ENCODE measurements at regions of chr1 and their contacts with region 1.

Region 1: GRCh38 chr1:15345711-15346355 is 63.9 kb upstream of the EFHD2 start:
- DNase-seq: peak; percentile 78 to 82
- ATAC-seq: peak; percentile 85 to 94 (median 91)
- H3K4me3 ChIP-seq: no peak overlapping the region
- H3K4me3 Mint-ChIP-seq: peak overlapping the region; percentile 79
- H3K27ac ChIP-seq: peak overlapping the region; percentile 94
- H3K27ac Mint-ChIP-seq: peak overlapping the region; percentile 88
- H3K4me1 ChIP-seq: peaks cover 86% of the 10 kb centered on the region
- H3K4me1 Mint-ChIP-seq: peaks cover 72 to 87% of the 10 kb centered on the region in 2 donors
- H3K27me3 ChIP-seq: no peaks in the 10 kb centered on the region
- H3K27me3 Mint-ChIP-seq: no peaks in the 10 kb centered on the region
- CTCF ChIP-seq: no peak

Region 2: DNA sequence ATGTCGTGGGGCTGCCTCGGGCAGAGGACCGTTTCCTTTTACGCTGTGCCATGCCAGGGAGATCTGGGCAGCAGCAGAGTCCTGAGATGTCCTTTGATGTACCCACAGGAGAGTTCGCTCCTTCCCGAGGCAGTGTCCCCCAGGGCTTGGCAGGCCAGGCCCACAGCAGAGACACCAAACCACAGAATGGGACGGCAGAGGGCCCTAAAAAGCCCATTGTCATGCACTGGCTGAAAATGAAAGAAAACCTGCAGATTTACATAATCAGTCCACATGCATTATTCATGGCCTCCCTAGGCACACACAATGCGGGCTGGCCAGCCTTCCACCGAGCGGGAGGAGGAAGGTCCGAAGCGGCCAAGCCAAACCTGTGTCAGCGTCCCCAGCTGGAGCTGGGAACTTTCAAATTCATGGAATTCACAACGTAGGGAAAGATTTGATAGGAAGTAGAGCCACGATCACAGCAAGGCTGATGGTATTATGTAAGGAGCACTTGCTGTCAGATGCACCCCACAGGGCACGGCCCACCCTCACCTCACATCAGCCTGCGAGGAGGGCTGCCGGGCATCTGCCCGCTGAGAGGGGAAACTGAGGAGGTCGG is 38.6 kb after region 1 on chr1:
- intact Hi-C with region 1: loop called (anchors 5 kb)
- DNase-seq: peak; percentile 20 to 29
- ATAC-seq: peak; percentile 67 to 75 (median 72)
- H3K4me3 ChIP-seq: peak overlapping the region; percentile 36
- H3K4me3 Mint-ChIP-seq: peak overlapping the region; percentile 93
- H3K27ac ChIP-seq: peak overlapping the region; percentile 63
- H3K27ac Mint-ChIP-seq: peak overlapping the region; percentile 87 to 88
- H3K4me1 ChIP-seq: peaks cover 38% of the 10 kb centered on the region
- H3K4me1 Mint-ChIP-seq: peaks cover 34 to 55% of the 10 kb centered on the region in 2 donors
- H3K27me3 ChIP-seq: no peaks in the 10 kb centered on the region
- H3K27me3 Mint-ChIP-seq: no peaks in the 10 kb centered on the region
- CTCF ChIP-seq: no peak

Region 3: GRCh38 chr1:15409388-15410222 is 63.8 kb after region 1 on chr1 and contains the start of gene EFHD2:
- intact Hi-C with region 1: loop called (anchors 1 kb)
- DNase-seq: peak; percentile 93 to 99
- ATAC-seq: peak; percentile 47 to 79 (median 66)
- H3K4me3 ChIP-seq: peak within 1 kb of the TSS; percentile 97
- H3K4me3 Mint-ChIP-seq: peak within 1 kb of the TSS; percentile 97
- H3K27ac ChIP-seq: peak within 1 kb of the TSS; percentile 99
- H3K27ac Mint-ChIP-seq: peak within 1 kb of the TSS; percentile 93 to 100
- H3K4me1 ChIP-seq: peaks cover 81% of the 10 kb centered on the region
- H3K4me1 Mint-ChIP-seq: peaks cover 76 to 85% of the 10 kb centered on the region in 2 donors
- H3K27me3 ChIP-seq: no peaks in the 10 kb centered on the region
- H3K27me3 Mint-ChIP-seq: no peaks in the 10 kb centered on the region
- CTCF ChIP-seq: no peak
- total RNA-seq, gene EFHD2: 804 to 952 (median 855) TPM

Region 4: GRCh38 chr1:15417365-15417934 is 71.6 kb after region 1 on chr1:
- intact Hi-C with region 1: loop called (anchors 2 kb)
- DNase-seq: peak; percentile 75 to 89
- ATAC-seq: peak; percentile 57 to 85 (median 75)
- H3K4me3 ChIP-seq: no peak overlapping the region
- H3K4me3 Mint-ChIP-seq: peak overlapping the region; percentile 97
- H3K27ac ChIP-seq: peak overlapping the region; percentile 99
- H3K27ac Mint-ChIP-seq: peak overlapping the region; percentile 93 to 100
- H3K4me1 ChIP-seq: peaks cover 98% of the 10 kb centered on the region
- H3K4me1 Mint-ChIP-seq: peaks cover 85 to 89% of the 10 kb centered on the region in 2 donors
- H3K27me3 ChIP-seq: no peaks in the 10 kb centered on the region
- H3K27me3 Mint-ChIP-seq: no peaks in the 10 kb centered on the region
- CTCF ChIP-seq: no peak